Dorsolateral prefrontal cortex (tissue), 120 donors: ENCODE measurements at regions of chr5 and their contacts with region 1.

Region 1: GRCh38 chr5:136814619-136815378 is 449.5 kb upstream of the TRPC7 start:
- DNase-seq: peak in 1 of 10 donors; percentile 14
- H3K4me3 ChIP-seq: no peak overlapping the region
- H3K27ac ChIP-seq: no peak overlapping the region
- H3K27me3 ChIP-seq: no peaks in the 10 kb centered on the region
- CTCF ChIP-seq: no peak

Region 2: GRCh38 chr5:136840601-136841000 is 25.8 kb after region 1 on chr5:
- intact Hi-C with region 1: loop called in 1 of 2 experiments (anchors 2 kb)
- DNase-seq: no peak
- H3K4me3 ChIP-seq: no peak overlapping the region
- H3K27ac ChIP-seq: peak overlapping the region in 1 of 59 donors; percentile 9
- H3K27me3 ChIP-seq: peaks cover 0 to 7% (median 0%) of the 10 kb centered on the region in 45 donors
- CTCF ChIP-seq: no peak